ENCODE measurements at regions of chr1 and their contacts with region 1.

Region 1: DNA sequence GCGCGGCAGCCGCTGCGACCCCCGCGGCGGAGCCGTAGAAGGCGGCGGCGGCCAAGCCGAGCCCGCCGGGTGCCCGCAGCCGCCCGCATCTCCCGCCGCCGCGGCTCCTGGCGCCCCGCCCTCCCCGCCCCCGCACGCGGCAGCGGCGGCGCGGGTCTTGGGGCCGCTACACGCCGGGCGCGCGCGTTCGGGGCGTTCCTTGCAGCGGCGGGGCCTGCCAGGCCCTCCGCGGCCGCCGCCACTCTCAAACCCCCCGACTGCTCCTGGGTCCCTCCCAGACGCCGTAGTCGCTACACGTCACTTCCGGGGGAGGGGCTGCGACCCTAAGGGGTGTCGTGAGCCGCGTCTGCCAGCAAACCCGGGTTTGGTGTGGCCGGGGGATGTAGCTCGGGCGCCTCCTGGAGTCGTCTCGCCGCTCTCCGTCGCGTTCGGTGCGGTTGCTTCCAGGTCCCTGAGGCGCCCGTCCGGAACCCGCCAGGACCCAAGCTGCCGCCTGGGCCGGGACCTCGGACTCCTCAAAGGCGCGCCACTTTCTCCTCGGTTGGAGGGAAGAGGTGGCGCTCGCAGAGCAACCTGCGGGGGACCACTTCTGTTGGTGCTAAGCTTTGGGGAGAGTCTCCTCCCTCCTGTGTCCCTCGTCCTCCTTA is at the start of gene ELK4:
- DNase-seq: peak; percentile 99
- H3K4me3 Mint-ChIP-seq: peak within 1 kb of the TSS; percentile 97
- H3K27ac Mint-ChIP-seq: peak within 1 kb of the TSS; percentile 99
- H3K4me1 Mint-ChIP-seq: peaks cover 53% of the 10 kb centered on the region
- H3K27me3 Mint-ChIP-seq: peaks cover 10% of the 10 kb centered on the region
- total RNA-seq, gene ELK4: 81.1 and 86.2 TPM in 2 replicates

Region 2: DNA sequence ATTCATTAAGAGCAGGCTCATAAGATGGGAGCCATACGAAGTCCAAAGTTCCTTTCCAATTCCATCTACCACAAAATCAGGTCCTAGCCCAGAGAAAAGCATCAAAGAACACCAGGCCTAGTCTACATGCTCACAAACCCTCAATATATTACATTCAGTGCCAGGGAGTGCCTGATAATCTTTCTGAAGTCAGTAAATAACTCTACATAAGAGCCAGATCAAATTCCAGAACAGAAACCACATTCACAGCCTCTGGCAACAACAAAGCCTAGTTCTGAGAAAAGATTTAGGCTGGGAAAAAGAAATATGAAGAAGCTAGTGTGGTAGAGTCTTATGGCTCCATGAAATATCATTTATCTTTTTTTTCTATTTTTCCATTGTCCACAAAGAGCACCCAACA is 469.5 kb before region 1 on chr1:
- intact Hi-C with region 1: no loop called
- DNase-seq: no peak
- H3K4me3 Mint-ChIP-seq: no peak overlapping the region
- H3K27ac Mint-ChIP-seq: no peak overlapping the region
- H3K4me1 Mint-ChIP-seq: peaks cover 10% of the 10 kb centered on the region
- H3K27me3 Mint-ChIP-seq: no peaks in the 10 kb centered on the region

Region 3: DNA sequence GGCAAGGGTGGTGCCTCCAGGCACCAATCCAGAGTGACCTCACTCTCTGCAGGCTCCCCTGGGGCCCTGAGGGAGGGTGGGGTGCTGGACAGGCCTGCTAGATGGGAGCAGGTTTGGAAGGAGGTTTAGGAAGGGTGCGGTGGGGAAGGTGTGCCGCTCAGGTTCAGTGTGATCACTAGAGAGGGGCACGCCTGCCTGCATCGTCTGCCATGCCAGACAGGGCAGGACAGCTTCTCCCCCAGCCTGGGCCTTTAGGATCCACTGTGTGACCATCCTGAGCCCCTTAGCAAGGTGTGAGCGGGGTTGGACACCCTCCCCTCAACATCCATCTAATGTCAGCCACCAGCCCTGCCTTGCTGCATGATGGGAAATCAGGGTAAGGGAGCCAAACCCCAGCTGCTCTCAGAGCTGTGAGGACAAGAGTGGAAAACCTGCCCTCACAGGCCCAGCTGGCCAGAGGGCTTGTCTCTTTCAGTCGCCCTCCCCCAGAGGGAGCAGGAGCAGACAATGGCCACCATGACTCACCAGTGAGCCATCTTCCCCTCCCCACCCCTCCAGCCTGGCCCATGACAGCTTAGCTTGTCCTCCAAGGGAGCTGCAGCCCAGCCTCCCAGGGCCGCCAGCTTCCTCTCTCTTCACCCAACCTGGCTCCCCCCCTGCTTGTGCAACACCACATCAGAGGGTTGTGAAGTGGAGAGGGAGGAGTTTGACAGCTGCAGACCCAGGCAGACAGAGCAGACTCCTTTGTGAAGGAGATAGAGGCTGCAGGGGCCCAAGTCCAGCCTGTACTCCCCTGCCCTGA is 347.3 kb before region 1 on chr1:
- intact Hi-C with region 1: loop called (anchors 1 kb)
- DNase-seq: peak; percentile 84
- H3K4me3 Mint-ChIP-seq: peak overlapping the region; percentile 64
- H3K27ac Mint-ChIP-seq: peak overlapping the region; percentile 90
- H3K4me1 Mint-ChIP-seq: peaks cover 75% of the 10 kb centered on the region
- H3K27me3 Mint-ChIP-seq: peaks cover 9% of the 10 kb centered on the region

Region 4: GRCh38 chr1:205591522-205592351 is 40.1 kb before region 1 on chr1:
- intact Hi-C with region 1: loop called (anchors 1 kb)
- DNase-seq: peak; percentile 82
- H3K4me3 Mint-ChIP-seq: peak overlapping the region; percentile 78
- H3K27ac Mint-ChIP-seq: peak overlapping the region; percentile 77
- H3K4me1 Mint-ChIP-seq: peaks cover 22% of the 10 kb centered on the region
- H3K27me3 Mint-ChIP-seq: peaks cover 3% of the 10 kb centered on the region

Region 5: DNA sequence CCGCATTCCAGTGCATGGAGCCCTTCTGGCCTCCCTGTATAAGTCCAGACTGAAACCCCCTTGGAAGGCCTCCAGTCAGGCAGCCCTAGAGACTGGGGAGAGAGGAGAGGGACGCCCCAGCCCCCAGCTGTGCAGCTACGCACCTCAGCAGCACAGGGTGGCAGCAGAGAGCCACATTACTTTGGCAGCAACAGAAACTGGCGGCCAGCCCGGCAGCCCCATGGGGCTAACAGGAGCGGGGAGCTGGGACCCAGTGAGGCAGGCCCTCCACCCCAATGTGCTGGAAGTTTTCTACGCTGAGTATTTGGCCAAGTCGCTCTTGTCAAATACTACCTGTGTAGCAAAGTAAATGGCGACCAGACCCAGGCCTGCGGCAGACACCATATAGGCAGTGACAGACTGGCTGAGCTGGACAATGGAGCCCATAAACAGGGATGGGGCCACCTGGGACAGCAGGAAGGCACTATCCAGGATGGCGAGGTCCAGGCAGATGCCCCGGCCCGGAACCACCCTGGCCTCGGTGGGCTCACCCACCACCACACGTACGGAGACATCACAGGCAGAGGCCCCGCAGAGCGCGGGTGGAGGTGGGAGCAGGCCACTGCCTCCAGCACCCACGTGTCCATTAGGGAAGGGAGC is 27.2 kb after region 1 on chr1:
- intact Hi-C with region 1: loop called (anchors 1 kb)
- DNase-seq: peak; percentile 66
- H3K4me3 Mint-ChIP-seq: no peak overlapping the region
- H3K27ac Mint-ChIP-seq: no peak overlapping the region
- H3K4me1 Mint-ChIP-seq: no peaks in the 10 kb centered on the region
- H3K27me3 Mint-ChIP-seq: peaks cover 15% of the 10 kb centered on the region

Region 6: GRCh38 chr1:205775015-205775716 is 143.3 kb after region 1 on chr1 and contains the start of gene RAB29:
- intact Hi-C with region 1: loop called (anchors 1 kb)
- DNase-seq: peak; percentile 82
- H3K4me3 Mint-ChIP-seq: peak within 1 kb of the TSS; percentile 88
- H3K27ac Mint-ChIP-seq: peak within 1 kb of the TSS; percentile 93
- H3K4me1 Mint-ChIP-seq: peaks cover 59% of the 10 kb centered on the region
- H3K27me3 Mint-ChIP-seq: no peaks in the 10 kb centered on the region
- total RNA-seq, gene RAB29: 37.2 and 38.1 TPM in 2 replicates

Measured in activated T-helper 1 cell treated with anti-CD3 and anti-CD28 coated beads, Interleukin-12 subunit alpha, Interleukin-12 subunit beta, Interleukin-2, Interleukin-4 antibody, amounts not matched to agents 30 ng/mL and 10 ng/mL and 1 ng/mL, durations not matched to agents 14 hours and 24 hours and 36 hours (primary cell).